Calu3 (cell line): ENCODE measurements at regions of chr9 and their contacts with region 1.

Region 1: DNA sequence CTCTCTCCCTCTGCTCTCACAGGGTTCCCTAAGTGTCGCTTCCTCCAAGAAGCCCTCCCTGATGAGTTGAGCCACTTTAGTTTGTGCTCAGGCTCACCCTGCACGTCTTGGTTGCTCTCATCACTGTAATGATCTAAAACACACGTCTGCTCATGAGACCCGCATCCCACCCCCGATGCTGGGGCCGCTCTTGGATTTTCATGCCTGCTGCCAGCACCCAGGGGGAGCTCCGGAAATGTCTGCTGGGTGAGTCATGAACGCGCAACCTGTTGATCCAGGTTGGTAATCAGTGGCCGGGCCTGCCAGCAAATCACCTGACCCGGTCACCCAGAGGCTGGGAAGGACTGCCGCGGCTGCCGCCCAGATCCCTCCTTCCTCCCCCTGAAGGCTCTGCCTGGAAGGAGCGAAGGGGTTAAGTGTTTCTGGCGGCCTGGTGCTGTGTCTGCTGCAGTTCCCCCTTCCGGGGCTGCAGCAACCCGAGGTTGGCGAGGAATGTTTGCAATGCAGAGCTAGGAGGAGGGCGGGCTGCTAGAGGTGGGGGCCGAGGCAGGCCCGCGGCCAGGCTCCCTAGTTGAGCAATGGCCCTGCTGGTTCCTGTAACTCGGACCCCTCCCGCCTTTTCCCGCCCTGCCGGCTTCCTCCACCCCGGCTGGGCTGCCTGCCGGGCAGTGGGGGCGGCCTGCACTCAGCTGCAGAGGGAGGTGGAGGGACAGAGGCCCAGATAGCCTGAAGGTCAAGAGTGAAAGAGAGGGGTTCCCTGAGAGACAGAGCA is 156.1 kb upstream of the IER5L start:
- DNase-seq: peak; percentile 95
- H3K4me3 Mint-ChIP-seq: peak overlapping the region; percentile 63
- H3K27ac Mint-ChIP-seq: peak overlapping the region; percentile 98
- H3K4me1 Mint-ChIP-seq: peaks cover 26% of the 10 kb centered on the region
- H3K27me3 Mint-ChIP-seq: no peaks in the 10 kb centered on the region
- CTCF ChIP-seq: no peak

Region 2: DNA sequence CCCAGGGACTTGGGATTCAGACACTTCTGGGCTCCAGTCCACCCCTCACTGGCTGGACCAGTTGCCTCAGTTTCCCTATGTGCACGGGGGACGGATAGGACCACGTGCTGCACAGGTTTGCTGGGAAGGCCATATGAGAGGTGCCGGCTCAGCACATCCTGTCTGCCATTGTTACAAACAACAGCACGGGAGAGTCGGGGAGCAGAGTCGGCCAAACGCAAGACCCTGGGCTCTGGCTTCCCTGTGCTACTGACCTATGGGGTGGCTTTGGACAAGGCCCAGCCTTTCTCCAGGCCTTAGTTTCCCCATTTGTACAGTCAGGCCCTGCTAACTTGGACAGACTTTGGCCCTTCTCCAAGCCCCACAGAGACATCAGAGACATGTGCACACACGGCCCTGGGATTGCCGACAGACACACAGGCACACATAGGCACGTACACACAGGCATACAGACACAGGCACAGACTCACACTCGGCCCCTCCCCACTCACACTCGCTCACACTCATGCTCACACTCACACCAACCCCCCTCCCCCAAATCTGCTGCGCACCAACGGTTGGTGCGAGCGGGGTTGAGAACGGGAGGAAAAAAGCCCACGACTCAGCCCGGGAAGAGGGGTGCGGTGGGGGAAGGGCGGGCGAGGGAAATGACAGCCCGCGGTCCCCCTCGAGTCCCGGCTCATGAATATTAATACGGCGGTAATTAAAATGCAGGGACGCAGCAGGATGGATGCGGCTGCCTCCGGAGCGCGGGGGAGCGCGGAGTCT is 153.7 kb after region 1 on chr9:
- CTCF ChIA-PET with region 1: interaction called, 4 read pairs
- intact Hi-C with region 1: loop called (anchors 5 kb)
- DNase-seq: no peak
- H3K4me3 Mint-ChIP-seq: peak overlapping the region; percentile 59
- H3K27ac Mint-ChIP-seq: peak overlapping the region; percentile 98
- H3K4me1 Mint-ChIP-seq: peaks cover 65% of the 10 kb centered on the region
- H3K27me3 Mint-ChIP-seq: no peaks in the 10 kb centered on the region
- CTCF ChIP-seq: no peak

Region 3: DNA sequence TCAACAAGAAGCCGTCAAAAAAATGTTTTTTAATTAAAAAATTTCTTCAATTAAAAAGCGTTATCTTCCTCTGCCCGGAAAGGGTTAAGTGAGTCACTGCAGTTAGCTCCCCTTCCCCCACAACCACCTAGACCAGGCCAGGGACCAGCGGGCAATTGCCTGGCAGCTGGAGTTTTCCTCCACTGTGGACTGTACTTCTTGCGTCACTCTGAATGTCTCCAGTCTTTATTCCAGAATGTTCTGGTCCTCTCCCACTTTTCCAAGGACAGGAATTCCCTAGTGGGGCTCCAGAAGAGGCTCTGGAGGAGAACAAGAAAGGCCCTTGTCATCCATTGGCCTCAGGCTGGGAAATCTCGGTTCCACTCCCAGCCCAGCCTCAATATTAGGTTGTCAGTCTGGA is 172.8 kb after region 1 on chr9:
- CTCF ChIA-PET with region 1: no interaction called
- intact Hi-C with region 1: no loop called
- DNase-seq: no peak
- H3K4me3 Mint-ChIP-seq: no peak overlapping the region
- H3K27ac Mint-ChIP-seq: no peak overlapping the region
- H3K4me1 Mint-ChIP-seq: peaks cover 13% of the 10 kb centered on the region
- H3K27me3 Mint-ChIP-seq: no peaks in the 10 kb centered on the region
- CTCF ChIP-seq: no peak